Left lung (tissue), 14 donors: ENCODE measurements at regions of chr1 and their contacts with region 1.

Region 1: GRCh38 chr1:182084487-182085316 is 23.2 kb upstream of the ZNF648 start:
- DNase-seq: peak; percentile 72 to 90 (median 86)
- ATAC-seq: peak; percentile 97
- H3K4me3 ChIP-seq: no peak overlapping the region
- H3K27ac ChIP-seq: peak overlapping the region; percentile 13 to 31
- H3K4me1 ChIP-seq: peaks cover 2 to 24% of the 10 kb centered on the region in 2 donors
- H3K27me3 ChIP-seq: no peaks in the 10 kb centered on the region
- CTCF ChIP-seq: peak; percentile 84 to 95

Region 2: DNA sequence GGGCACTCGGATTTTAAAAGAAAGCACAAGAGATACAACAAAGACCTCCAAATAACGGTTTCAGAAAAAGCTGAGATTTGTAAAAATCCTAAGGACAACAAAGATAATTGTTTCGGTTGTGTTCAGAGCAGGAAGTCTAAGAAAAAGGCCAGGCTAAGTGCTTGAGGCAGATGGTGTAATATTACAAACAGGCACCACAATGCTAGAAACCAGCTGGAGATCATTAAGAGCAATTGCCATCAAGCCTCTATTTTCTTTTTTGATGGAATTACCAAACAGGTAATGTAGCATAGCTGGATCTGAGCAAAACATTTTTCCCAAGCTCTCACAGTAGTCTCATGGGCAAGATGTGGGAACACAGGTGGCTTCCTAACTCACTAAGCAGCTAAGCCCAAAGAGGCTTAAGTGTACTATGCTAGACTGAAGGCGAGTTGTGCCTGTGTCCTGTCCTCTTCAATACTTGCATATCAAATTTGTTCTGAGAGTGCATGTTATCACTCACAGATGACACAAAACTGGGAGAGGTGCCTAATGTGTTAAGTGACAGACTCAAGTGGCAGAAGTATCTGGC is 145.3 kb after region 1 on chr1:
- intact Hi-C with region 1: no loop called
- DNase-seq: peak in 1 of 4 donors; percentile 38
- ATAC-seq: peak; percentile 59
- H3K4me3 ChIP-seq: no peak overlapping the region
- H3K27ac ChIP-seq: no peak overlapping the region
- H3K4me1 ChIP-seq: peaks cover 0 to 3% of the 10 kb centered on the region in 2 donors
- H3K27me3 ChIP-seq: no peaks in the 10 kb centered on the region
- CTCF ChIP-seq: no peak

Region 3: GRCh38 chr1:182397771-182398393 is 313.2 kb after region 1 on chr1:
- intact Hi-C with region 1: loop called in 1 of 2 experiments (anchors 5 kb)
- DNase-seq: peak in 1 of 4 donors; percentile 52
- ATAC-seq: peak; percentile 71
- H3K4me3 ChIP-seq: no peak overlapping the region
- H3K27ac ChIP-seq: peak overlapping the region; percentile 39 to 59
- H3K4me1 ChIP-seq: peaks cover 0 to 48% of the 10 kb centered on the region in 2 donors
- H3K27me3 ChIP-seq: no peaks in the 10 kb centered on the region
- CTCF ChIP-seq: no peak